ENCODE measurements at regions of chr22 and their contacts with region 1.

Region 1: DNA sequence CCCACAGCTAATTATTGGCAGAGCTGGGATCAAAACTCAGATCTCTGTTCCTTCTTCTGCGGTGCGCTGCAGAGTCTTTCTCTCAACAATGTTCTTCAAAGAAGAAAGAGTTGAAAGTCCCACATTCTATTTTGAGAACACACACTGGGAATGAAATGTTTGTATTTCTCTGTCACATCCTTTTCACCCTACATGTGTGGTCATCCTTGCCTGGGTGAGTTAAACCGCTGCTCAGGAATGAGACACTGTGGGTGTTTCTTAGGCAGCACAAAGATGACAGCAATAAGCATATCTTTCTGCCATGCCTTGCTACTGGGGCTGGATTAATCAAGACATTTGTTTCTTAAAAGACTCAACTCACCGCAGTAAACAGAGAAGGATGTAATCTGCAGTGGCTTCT is 222.6 kb downstream of the LARGE1 start:
- DNase-seq: no peak
- ATAC-seq: no peak

Region 2: DNA sequence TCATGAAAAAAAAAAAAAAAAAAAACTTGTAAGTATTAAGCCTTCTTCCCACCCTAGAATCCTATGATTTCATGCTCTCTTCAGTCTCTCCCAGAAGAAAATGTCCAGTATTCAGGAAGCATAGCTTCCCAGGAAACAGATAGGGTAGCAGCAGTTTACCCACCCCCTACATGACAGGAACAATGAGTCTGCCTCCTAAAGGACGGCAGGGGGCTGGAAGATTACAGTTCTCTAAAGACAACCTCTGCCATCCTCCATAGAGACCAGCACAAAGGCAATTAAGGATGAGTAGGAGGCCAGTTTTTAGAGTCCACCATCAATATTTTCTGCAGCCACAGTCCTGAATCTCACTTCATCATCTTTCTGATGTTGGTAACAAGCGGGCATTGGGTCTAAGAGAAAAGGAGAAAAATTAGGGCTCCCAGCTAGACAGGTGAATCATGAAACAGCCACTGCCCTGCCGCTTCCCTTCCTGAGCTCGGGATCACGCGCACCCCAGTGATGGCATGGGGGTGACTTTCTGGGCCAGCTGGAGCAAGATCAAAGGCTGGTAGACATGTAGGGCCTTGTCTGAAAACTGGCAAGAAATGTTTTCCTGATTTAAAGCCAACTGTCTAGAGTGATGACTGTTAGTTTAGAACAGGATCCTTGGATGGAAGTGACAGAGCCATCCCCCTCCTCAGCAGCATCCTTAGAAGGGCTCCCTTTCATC is 100.2 kb before region 1 on chr22:
- intact Hi-C with region 1: no loop called
- DNase-seq: peak; percentile 41
- ATAC-seq: peak; percentile 44

Region 3: GRCh38 chr22:33747576-33748180 is 50.0 kb after region 1 on chr22:
- intact Hi-C with region 1: loop called (anchors 10 kb)
- DNase-seq: no peak
- ATAC-seq: no peak

Region 4: DNA sequence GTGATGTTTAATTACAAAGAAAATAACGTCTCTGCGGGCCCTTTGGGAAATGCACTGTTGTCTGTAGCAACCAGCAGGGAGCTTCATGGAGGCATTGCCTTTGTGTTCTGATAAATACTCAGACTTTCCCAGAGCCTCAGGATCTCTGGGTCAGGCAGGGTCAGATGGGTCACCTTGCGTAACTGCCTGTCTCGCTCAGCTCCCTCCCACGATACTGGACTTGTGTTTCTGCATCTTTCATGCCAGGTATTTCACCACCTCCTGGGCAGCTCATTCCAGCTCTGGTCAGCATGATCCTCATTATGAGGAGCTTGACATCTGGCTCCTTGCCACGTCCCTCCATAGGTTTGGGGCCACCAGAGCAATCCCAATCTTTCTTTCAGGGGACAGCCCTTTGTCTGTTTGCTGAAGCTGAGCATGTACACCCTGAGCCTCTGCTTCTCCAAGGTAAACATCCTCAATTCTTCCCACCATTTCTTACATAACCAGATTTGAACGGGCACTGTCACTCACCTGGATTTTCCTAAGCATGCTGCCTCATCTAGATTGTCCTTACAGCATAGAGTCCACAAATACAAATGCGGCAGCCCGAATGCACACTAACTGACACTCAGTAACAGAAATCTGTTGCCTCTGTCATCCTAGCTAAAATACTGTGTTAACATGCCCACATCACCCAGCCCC is 60.3 kb after region 1 on chr22:
- intact Hi-C with region 1: no loop called
- DNase-seq: no peak
- ATAC-seq: peak; percentile 70